Naive thymus-derived CD4-positive, alpha-beta T cell (primary cell): ENCODE measurements at regions of chr10 and their contacts with region 1.

Region 1: DNA sequence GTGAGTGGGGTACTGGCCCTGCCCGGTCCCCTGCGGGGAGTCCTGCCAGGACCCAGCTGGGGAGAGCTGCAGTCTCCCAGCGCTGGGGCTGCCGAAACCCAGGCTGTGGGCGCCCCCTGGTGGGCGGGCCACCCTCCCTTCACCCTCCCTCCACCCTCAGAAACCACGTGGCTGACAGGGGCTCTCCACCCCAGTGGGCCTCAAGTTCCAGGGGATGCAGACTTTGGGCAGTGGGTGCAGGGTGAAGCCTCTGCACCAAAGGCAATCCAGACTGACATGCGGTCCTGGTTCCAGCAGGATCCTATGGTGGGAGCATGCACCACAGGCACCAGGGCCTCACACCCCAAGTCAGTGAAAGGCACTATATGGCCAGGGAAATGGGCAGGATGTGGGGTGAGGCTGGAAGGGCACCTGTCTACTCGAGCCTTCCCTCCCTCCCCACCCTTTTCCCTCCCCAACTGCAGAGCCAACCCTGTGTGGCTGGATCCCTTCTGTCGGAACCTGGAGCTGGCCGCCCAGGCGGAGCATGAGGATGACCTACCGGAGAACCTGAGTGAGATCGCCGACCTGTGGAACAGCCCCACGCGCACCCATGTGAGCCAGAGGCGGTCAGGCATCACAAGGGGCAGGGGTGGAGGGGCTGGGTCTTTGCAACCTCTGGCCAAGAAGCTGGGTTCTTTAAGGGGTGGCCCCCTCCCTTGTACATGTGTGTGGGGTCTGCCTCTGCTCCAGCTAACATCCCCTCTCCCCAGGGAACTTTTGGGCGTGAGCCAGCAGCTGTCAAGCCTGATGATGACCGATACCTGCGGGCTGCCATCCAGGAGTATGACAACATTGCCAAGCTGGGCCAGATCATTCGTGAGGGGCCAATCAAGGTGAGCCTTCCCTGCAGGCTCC is 38.8 kb downstream of the PSAP start:
- DNase-seq: peak; percentile 64 to 87 (median 80)
- ATAC-seq: peak; percentile 91
- H3K4me3 ChIP-seq: no peak overlapping the region
- H3K4me3 Mint-ChIP-seq: no peak overlapping the region
- H3K27ac ChIP-seq: no peak overlapping the region
- H3K27ac Mint-ChIP-seq: peak overlapping the region in 1 of 9 donors; percentile 48
- H3K4me1 ChIP-seq: no peaks in the 10 kb centered on the region
- H3K4me1 Mint-ChIP-seq: peaks cover 0 to 7% (median 0%) of the 10 kb centered on the region in 7 donors
- H3K27me3 ChIP-seq: no peaks in the 10 kb centered on the region
- H3K27me3 Mint-ChIP-seq: no peaks in the 10 kb centered on the region

Region 2: DNA sequence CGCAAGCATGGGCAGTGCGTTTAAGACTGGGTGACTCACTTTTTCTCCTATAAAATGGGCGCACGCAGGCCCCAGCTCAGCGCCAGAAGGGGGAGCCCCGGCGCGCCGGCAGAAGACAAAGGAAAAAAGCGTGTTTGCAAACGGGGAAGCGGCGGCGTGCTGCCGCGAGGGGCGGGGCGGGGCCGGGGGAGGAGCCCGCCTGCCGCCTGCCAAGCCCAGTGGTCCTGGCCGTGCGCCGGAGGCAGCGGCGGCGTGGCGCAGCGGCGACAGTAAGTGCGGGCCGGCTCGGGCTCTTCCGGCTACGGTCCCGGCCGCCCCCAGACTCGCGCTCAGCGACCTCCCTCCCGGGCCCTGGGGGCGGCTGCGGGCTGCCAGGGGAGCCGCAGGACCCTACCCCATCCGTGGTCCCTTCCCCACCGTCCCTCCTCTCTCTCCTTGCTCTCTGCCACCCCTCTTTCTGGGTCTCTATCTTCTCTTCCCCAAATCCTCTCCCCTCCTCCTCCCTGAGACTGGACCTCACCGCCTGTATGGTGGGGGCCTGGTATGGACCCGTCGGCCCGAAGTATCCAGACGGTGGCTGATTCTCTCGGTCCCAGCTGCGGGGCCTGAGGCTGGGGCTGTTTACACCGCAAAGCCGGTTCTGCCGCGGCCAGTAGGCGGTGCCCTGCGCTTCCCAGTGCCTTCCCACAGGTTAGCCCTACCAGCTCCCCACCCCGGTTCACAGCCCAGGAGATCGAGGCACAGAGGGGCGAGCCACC is 493.0 kb before region 1 on chr10 and contains the start of gene SLC29A3:
- CTCF ChIA-PET with region 1: interaction called, 9 read pairs
- POLR2A ChIA-PET with region 1: no interaction called
- intact Hi-C with region 1: loop called (anchors 1 kb)
- DNase-seq: peak; percentile 45 to 85 (median 70)
- ATAC-seq: peak; percentile 91
- H3K4me3 ChIP-seq: peak within 1 kb of the TSS; percentile 81
- H3K4me3 Mint-ChIP-seq: peak within 1 kb of the TSS; percentile 85 to 97 (median 94)
- H3K27ac ChIP-seq: peak within 1 kb of the TSS; percentile 62
- H3K27ac Mint-ChIP-seq: peak within 1 kb of the TSS; percentile 71 to 94 (median 85)
- H3K4me1 ChIP-seq: peaks cover 5 to 10% of the 10 kb centered on the region in 2 donors
- H3K4me1 Mint-ChIP-seq: peaks cover 27 to 53% (median 40%) of the 10 kb centered on the region in 7 donors
- H3K27me3 ChIP-seq: no peaks in the 10 kb centered on the region
- H3K27me3 Mint-ChIP-seq: no peaks in the 10 kb centered on the region
- total RNA-seq, gene SLC29A3: 3.5 to 7.2 (median 5.1) TPM

Region 3: GRCh38 chr10:71396084-71396720 is 416.1 kb before region 1 on chr10:
- CTCF ChIA-PET with region 1: no interaction called
- POLR2A ChIA-PET with region 1: no interaction called
- intact Hi-C with region 1: loop called in 1 of 2 experiments (anchors 1 kb)
- DNase-seq: peak in 6 of 9 donors; percentile 18 to 33 (median 26)
- ATAC-seq: peak; percentile 68
- H3K4me3 ChIP-seq: peak overlapping the region; percentile 24
- H3K4me3 Mint-ChIP-seq: peak overlapping the region; percentile 11 to 83 (median 68)
- H3K27ac ChIP-seq: no peak overlapping the region
- H3K27ac Mint-ChIP-seq: no peak overlapping the region
- H3K4me1 ChIP-seq: no peaks in the 10 kb centered on the region
- H3K4me1 Mint-ChIP-seq: peaks cover 0 to 11% (median 4%) of the 10 kb centered on the region in 7 donors
- H3K27me3 ChIP-seq: peaks cover 0 to 16% of the 10 kb centered on the region in 2 donors
- H3K27me3 Mint-ChIP-seq: peaks cover 59 to 76% (median 67%) of the 10 kb centered on the region in 5 donors

Region 4: GRCh38 chr10:71569775-71570588 is 242.3 kb before region 1 on chr10:
- CTCF ChIA-PET with region 1: interaction called, 4 read pairs
- POLR2A ChIA-PET with region 1: no interaction called
- intact Hi-C with region 1: loop called in 1 of 2 experiments (anchors 2 kb)
- DNase-seq: peak; percentile 39 to 81 (median 64)
- ATAC-seq: peak; percentile 67
- H3K4me3 ChIP-seq: no peak overlapping the region
- H3K4me3 Mint-ChIP-seq: no peak overlapping the region
- H3K27ac ChIP-seq: no peak overlapping the region
- H3K27ac Mint-ChIP-seq: no peak overlapping the region
- H3K4me1 ChIP-seq: no peaks in the 10 kb centered on the region
- H3K4me1 Mint-ChIP-seq: peaks cover 0 to 4% (median 0%) of the 10 kb centered on the region in 7 donors
- H3K27me3 ChIP-seq: no peaks in the 10 kb centered on the region
- H3K27me3 Mint-ChIP-seq: no peaks in the 10 kb centered on the region

Region 5: DNA sequence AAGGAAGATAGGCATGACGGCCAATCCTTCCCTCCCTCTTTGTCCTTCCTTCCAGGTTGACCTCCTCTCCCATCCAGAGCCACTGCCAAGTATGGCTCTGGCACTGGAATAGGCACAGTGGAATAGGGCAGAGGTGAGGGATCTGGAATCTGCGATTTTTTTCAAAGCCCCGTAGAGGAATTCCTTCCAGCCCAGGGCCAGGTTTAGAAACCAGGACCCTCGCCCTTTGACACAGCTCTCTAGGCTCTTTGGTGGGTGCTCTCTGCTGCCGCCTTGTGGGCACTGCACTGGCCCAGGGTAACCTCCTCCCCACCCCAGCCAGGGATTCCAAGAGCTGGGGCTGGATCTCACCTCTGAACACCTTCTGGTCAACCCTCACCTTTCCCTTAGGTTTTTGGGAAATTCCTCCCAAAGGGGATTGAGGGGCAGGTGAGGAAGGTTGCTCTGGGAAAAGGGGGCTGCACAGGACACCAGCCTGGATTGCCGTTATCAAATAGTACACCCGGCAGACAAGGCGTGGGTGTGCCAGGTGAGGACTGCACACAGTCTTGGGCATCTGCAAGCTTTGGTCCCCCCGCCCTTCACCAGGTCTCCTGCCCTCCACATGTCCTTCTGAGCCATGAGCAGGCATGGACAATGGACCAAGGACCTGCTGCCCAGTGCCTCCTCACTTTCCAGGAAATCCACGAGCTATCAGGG is 115.5 kb before region 1 on chr10:
- CTCF ChIA-PET with region 1: interaction called, 14 read pairs
- POLR2A ChIA-PET with region 1: no interaction called
- intact Hi-C with region 1: loop called in 1 of 2 experiments (anchors 1 kb)
- DNase-seq: peak; percentile 36 to 71 (median 54)
- ATAC-seq: peak; percentile 70
- H3K4me3 ChIP-seq: no peak overlapping the region
- H3K4me3 Mint-ChIP-seq: peak overlapping the region in 2 of 10 donors; percentile 16 to 48
- H3K27ac ChIP-seq: no peak overlapping the region
- H3K27ac Mint-ChIP-seq: peak overlapping the region in 1 of 9 donors; percentile 38
- H3K4me1 ChIP-seq: peaks cover 23 to 50% of the 10 kb centered on the region in 2 donors
- H3K4me1 Mint-ChIP-seq: peaks cover 6 to 41% (median 25%) of the 10 kb centered on the region in 7 donors
- H3K27me3 ChIP-seq: no peaks in the 10 kb centered on the region
- H3K27me3 Mint-ChIP-seq: no peaks in the 10 kb centered on the region